Aorta (tissue), 5 donors: ENCODE measurements at regions of chr19 and their contacts with region 1.

Region 1: DNA sequence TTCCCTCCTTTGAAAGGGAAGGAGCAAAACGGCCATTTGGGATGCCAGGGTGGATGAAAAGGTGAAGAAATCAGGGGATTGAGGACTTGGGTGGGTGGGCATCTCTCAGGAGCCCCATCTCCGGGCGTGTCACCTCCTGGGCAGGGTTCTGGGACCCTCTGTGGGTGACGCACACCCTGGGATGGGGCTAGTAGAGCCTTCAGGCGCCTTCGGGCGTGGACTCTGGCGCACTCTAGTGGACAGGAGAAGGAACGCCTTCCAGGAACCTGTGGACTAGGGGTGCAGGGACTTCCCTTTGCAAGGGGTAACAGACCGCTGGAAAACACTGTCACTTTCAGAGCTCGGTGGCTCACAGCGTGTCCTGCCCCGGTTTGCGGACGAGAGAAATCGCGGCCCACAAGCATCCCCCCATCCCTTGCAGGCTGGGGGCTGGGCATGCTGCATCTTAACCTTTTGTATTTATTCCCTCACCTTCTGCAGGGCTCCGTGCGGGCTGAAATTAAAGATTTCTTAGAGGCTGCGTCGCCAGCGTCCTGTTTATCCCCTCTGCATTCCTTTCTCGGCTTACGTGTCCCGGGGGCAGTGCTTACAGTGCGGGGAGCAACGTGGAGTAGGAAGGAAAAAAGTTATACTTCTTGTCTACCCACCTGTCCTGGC is 15.2 kb upstream of the S1PR4 start:
- DNase-seq: peak; percentile 69 to 89
- ATAC-seq: peak; percentile 92
- H3K4me3 ChIP-seq: no peak overlapping the region
- H3K27ac ChIP-seq: no peak overlapping the region
- H3K4me1 ChIP-seq: no peaks in the 10 kb centered on the region
- H3K27me3 ChIP-seq: no peaks in the 10 kb centered on the region

Region 2: GRCh38 chr19:2887391-2887914 is 275.9 kb before region 1 on chr19:
- intact Hi-C with region 1: loop called (anchors 5 to 10 kb)
- DNase-seq: peak in 1 of 2 donors; percentile 17
- ATAC-seq: peak; percentile 59
- H3K4me3 ChIP-seq: no peak overlapping the region
- H3K27ac ChIP-seq: no peak overlapping the region
- H3K4me1 ChIP-seq: no peaks in the 10 kb centered on the region
- H3K27me3 ChIP-seq: no peaks in the 10 kb centered on the region

Region 3: GRCh38 chr19:2950286-2951124 is 212.9 kb before region 1 on chr19:
- intact Hi-C with region 1: loop called (anchors 5 kb)
- DNase-seq: peak; percentile 100
- ATAC-seq: peak; percentile 98
- H3K4me3 ChIP-seq: peak overlapping the region; percentile 52 to 59
- H3K27ac ChIP-seq: peak overlapping the region; percentile 25 to 64
- H3K4me1 ChIP-seq: no peaks in the 10 kb centered on the region
- H3K27me3 ChIP-seq: no peaks in the 10 kb centered on the region

Region 4: GRCh38 chr19:2962045-2962561 is 201.3 kb before region 1 on chr19:
- intact Hi-C with region 1: loop called in 1 of 2 experiments (anchors 5 kb)
- DNase-seq: no peak
- ATAC-seq: peak; percentile 91
- H3K4me3 ChIP-seq: no peak overlapping the region
- H3K27ac ChIP-seq: no peak overlapping the region
- H3K4me1 ChIP-seq: no peaks in the 10 kb centered on the region
- H3K27me3 ChIP-seq: no peaks in the 10 kb centered on the region

Region 5: GRCh38 chr19:3075895-3076431 is 87.4 kb before region 1 on chr19:
- intact Hi-C with region 1: loop called (anchors 2 to 5 kb)
- DNase-seq: peak in 1 of 2 donors; percentile 92
- ATAC-seq: peak; percentile 89
- H3K4me3 ChIP-seq: no peak overlapping the region
- H3K27ac ChIP-seq: no peak overlapping the region
- H3K4me1 ChIP-seq: no peaks in the 10 kb centered on the region
- H3K27me3 ChIP-seq: no peaks in the 10 kb centered on the region

Region 6: DNA sequence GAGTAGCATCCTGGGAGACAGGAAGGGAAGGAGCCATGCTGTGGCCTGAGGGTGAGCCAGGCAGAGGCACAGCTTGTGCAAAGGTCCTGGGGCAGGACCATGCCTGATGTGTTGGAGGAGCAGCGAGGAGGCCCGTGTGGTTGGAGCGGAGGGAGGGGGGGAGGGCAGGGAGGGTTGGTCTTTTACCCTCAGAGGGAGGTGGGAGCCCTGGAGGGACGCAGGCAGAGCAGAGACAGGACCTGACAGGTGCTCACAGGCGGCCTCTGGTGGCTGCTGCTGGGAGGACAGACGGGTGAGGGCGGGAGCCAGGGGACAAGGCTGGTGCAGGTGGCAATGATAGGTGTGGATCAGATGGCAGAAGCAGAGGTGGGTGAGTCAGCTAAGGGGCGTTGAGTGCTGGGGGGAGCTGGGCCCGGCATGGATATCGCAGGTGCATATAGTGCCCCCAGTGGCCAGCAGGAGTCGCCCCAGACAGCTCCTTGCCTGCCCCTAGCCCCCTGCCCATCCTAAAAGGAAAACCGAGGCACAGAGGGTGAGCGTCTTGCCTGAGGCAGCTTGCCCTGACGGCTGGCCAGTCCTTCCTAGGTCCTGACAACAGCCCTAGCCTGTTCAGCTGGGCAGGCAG is 37.3 kb before region 1 on chr19:
- intact Hi-C with region 1: loop called in 1 of 2 experiments (anchors 5 kb)
- DNase-seq: peak in 1 of 2 donors; percentile 87
- ATAC-seq: no peak
- H3K4me3 ChIP-seq: no peak overlapping the region
- H3K27ac ChIP-seq: no peak overlapping the region
- H3K4me1 ChIP-seq: no peaks in the 10 kb centered on the region
- H3K27me3 ChIP-seq: no peaks in the 10 kb centered on the region